Activated T-helper 1 cell treated with anti-CD3 and anti-CD28 coated beads, Interleukin-12 subunit alpha, Interleukin-12 subunit beta, Interleukin-2, Interleukin-4 antibody, amounts not matched to agents 30 ng/mL and 10 ng/mL and 1 ng/mL, durations not matched to agents 14 hours and 24 hours and 36 hours (primary cell): ENCODE measurements at regions of chr15 and their contacts with region 1.

Region 1: DNA sequence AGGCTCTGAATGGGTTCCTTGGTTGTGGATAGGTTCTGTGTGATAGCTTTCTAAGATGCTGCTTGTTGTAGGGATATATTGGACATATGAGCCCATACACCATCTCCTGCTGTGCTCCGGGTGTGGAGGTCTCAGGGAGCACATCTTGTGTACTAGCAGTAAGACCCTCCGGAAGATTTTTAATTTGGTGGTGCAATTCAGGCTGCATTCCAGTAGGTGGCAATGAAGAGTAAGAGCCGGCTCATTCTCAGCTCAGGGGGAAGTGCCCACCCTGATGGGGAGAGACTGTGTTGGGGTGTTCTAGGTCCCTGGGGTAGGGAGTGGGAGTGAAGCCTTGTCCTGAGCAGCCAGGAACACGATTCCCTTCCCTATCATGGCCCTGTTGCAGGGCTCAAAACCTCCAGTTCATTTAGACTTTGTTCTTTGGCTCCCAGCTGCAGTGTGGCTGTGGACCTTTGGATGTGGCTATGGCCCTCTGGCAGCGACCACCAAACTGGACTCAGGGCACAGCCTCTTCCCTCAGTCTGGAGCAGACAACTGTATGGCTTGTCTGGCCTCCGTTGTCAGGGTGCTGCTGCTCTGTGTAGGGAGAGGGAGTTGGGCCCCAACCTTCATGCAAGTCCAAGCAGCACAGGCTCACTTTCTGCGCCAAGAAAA is 104.7 kb downstream of the UNC13C start:
- DNase-seq: no peak
- H3K4me3 Mint-ChIP-seq: no peak overlapping the region
- H3K27ac Mint-ChIP-seq: no peak overlapping the region
- H3K4me1 Mint-ChIP-seq: no peaks in the 10 kb centered on the region
- H3K27me3 Mint-ChIP-seq: peaks cover 2% of the 10 kb centered on the region

Region 2: GRCh38 chr15:55108858-55109518 is 1026.0 kb after region 1 on chr15:
- intact Hi-C with region 1: loop called (anchors 10 kb)
- DNase-seq: peak; percentile 39
- H3K4me3 Mint-ChIP-seq: no peak overlapping the region
- H3K27ac Mint-ChIP-seq: no peak overlapping the region
- H3K4me1 Mint-ChIP-seq: no peaks in the 10 kb centered on the region
- H3K27me3 Mint-ChIP-seq: peaks cover 9% of the 10 kb centered on the region

Region 3: DNA sequence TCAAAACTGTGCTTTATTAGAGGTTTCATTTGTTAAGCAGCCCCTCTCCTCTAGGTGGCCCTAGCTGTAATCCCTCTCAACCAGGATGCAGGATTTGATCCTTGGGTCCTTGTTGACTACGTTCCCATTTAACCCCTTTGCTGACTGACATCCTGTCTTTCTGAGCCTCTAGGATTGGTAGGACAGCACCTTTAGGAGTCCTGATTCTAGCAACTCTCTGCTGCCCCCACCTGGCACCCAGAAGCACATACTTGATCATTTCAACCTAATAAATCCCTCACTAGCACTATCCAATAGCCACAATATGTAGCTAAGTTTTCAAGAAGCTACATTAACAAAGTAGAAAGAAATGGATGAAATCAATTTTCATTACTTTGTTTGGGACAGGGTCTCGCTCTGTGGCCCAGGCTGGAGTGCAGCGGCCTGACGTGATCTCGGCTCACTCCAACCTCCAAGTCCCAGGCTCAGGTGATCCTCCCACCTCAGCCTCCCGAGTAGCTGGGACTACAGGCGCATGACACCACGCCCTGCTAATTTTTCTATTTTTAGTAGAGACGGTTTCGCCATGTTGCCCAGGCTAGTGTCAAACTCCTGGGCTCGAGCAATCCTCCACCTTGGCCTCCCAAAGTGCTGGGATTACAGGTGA is 1085.5 kb after region 1 on chr15:
- intact Hi-C with region 1: loop called (anchors 5 kb)
- DNase-seq: peak; percentile 7
- H3K4me3 Mint-ChIP-seq: no peak overlapping the region
- H3K27ac Mint-ChIP-seq: no peak overlapping the region
- H3K4me1 Mint-ChIP-seq: no peaks in the 10 kb centered on the region
- H3K27me3 Mint-ChIP-seq: no peaks in the 10 kb centered on the region